A673 (cell line): ENCODE measurements at regions of chr5 and their contacts with region 1.

Region 1: GRCh38 chr5:122835681-122836080 is 9.7 kb upstream of the SNX24 start:
- DNase-seq: peak; percentile 10
- H3K4me3 ChIP-seq: no peak overlapping the region
- H3K27ac ChIP-seq: no peak overlapping the region
- H3K4me1 ChIP-seq: peaks cover 7% of the 10 kb centered on the region
- H3K27me3 ChIP-seq: no peaks in the 10 kb centered on the region
- CTCF ChIP-seq: no peak

Region 2: GRCh38 chr5:122704243-122705036 is 131.2 kb before region 1 on chr5:
- CTCF ChIA-PET with region 1: no interaction called
- POLR2A ChIA-PET with region 1: no interaction called
- intact Hi-C with region 1: loop called (anchors 10 kb)
- DNase-seq: peak; percentile 70
- H3K4me3 ChIP-seq: no peak overlapping the region
- H3K27ac ChIP-seq: no peak overlapping the region
- H3K4me1 ChIP-seq: peaks cover 3% of the 10 kb centered on the region
- H3K27me3 ChIP-seq: no peaks in the 10 kb centered on the region
- CTCF ChIP-seq: peak; percentile 68